Aorta (tissue), 5 donors: ENCODE measurements at regions of chr12 and their contacts with region 1.

Region 1: GRCh38 chr12:105676694-105677093 is 346.2 kb downstream of the C12orf75 start:
- DNase-seq: peak in 1 of 2 donors; percentile 56
- ATAC-seq: no peak
- H3K4me3 ChIP-seq: no peak overlapping the region
- H3K27ac ChIP-seq: no peak overlapping the region
- H3K4me1 ChIP-seq: peaks cover 0 to 12% of the 10 kb centered on the region in 2 donors
- H3K27me3 ChIP-seq: no peaks in the 10 kb centered on the region

Region 2: GRCh38 chr12:105382771-105383622 is 293.7 kb before region 1 on chr12:
- intact Hi-C with region 1: no loop called
- DNase-seq: no peak
- ATAC-seq: peak; percentile 89
- H3K4me3 ChIP-seq: peak overlapping the region in 1 of 2 donors; percentile 43
- H3K27ac ChIP-seq: no peak overlapping the region
- H3K4me1 ChIP-seq: no peaks in the 10 kb centered on the region
- H3K27me3 ChIP-seq: no peaks in the 10 kb centered on the region

Region 3: DNA sequence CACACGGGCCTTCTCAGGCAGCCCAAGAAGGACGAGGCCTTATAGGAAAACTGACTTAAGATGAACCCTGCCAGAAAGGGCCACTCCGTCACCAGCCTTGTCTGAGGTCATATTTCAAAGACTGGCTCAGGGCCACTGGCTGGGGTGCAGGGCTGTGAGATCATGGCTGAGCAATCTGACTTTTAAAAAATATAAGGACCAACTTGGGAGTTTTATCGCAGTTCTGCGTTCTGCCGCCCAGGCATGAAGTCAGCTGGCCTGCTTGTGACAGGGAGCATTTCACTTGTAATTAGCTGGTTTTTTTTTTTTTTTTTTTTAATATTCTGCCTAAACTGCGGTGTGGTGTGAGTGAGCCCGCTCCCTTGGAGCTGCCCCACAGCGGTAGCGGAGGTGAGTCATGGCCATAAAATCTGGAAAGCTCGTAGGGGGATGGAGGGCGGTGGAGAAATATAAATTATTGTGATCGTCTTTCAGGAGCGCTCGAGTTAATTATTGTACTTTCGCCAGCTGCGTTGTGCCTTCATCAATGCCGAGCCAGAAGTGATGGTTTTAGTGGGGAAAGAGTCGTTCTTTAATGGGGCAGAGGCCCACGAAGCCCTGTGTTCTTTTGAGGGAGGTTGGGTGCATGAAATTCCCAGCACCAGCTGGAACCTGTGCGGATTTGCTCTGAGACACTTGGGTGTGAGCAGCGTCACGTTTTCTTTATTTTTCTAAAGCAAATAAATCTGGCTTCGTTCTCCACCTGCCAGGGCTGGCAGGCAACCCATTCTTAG is 114.3 kb before region 1 on chr12:
- intact Hi-C with region 1: loop called in 1 of 2 experiments (anchors 5 kb)
- DNase-seq: peak; percentile 75 to 88
- ATAC-seq: peak; percentile 75
- H3K4me3 ChIP-seq: no peak overlapping the region
- H3K27ac ChIP-seq: peak overlapping the region in 1 of 2 donors; percentile 78
- H3K4me1 ChIP-seq: no peaks in the 10 kb centered on the region
- H3K27me3 ChIP-seq: peaks cover 0 to 1% of the 10 kb centered on the region in 2 donors